GM18951 (cell line): ENCODE measurements at regions of chr4 and their contacts with region 1.

Region 1: GRCh38 chr4:154332681-154333421 is 158.7 kb downstream of the DCHS2 start:
- POLR2A ChIP-seq: no peak

Region 2: DNA sequence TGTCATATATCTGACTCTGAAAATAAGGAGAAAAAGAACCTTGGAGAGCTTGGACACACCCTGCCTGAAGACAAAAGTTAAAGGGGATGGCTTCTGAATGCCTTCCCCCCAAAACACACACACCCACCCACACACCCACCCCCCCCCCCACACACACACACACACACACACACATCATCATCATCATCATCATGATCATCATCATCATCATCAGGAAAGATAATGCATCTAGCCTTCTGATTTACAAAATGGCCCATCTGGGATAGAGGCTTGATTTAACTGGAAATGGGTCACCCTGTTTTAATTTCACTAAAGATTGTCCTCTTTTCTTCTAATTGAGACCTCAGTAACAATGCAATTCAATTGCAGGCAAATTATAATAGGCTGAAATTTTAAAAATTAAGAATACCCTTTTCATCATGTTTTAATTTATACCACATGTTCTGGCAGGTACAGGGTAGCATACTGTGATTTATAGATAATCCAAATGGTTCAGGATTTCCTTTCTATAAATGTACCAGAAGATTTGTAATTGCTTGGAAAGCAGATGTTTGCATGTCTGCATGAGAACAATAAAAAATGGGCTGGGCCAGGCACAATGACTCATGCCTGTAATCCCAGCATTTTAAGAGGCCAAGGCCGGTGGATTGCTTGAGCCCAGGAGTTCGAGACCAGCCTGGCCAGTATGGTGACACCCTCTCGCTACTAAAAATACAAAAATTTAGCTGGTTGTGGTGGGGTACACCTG is 1072.1 kb before region 1 on chr4:
- in situ Hi-C with region 1: no loop called
- POLR2A ChIP-seq: no peak

Region 3: GRCh38 chr4:154506253-154506652 is 173.4 kb after region 1 on chr4:
- in situ Hi-C with region 1: loop called (anchors 25 kb)
- POLR2A ChIP-seq: no peak